Thyroid gland (tissue), 4 donors: ENCODE measurements at regions of chr11 and their contacts with region 1.

Region 1: GRCh38 chr11:8964324-8965320 is at the start of gene TMEM9B:
- DNase-seq: peak; percentile 95 to 98
- H3K4me3 ChIP-seq: peak within 1 kb of the TSS; percentile 24 to 78 (median 63)
- H3K27ac ChIP-seq: peak within 1 kb of the TSS; percentile 88 to 92 (median 90)
- H3K4me1 ChIP-seq: peaks cover 23 to 29% of the 10 kb centered on the region in 2 donors
- H3K27me3 ChIP-seq: no peaks in the 10 kb centered on the region
- CTCF ChIP-seq: peak in 1 of 6 experiments; percentile 11
- POLR2A ChIP-seq: peak; percentile 47 to 89
- total RNA-seq, gene TMEM9B: 73.3 to 158 (median 114) TPM

Region 2: DNA sequence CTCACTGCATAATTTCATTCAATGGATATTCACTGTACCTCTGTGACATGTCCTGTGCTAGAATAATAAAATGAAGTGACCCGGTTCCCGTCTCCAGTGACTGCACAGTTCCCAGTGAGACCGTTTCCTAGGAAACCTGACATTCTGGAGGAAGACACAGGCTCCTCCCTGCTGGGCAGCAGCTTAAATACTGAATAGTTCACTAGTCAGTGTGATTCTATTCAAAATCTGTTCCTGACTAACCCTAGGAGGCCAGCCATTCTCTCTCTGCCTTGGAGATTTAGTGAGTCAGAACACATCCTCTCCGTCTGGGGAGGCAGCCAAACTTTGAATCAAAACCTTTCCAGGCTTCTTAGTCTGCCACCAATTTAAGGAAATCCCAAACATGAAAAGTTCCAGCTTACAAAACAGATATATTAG is 293.4 kb before region 1 on chr11:
- intact Hi-C with region 1: loop called (anchors 10 kb)
- DNase-seq: peak; percentile 82 to 83
- H3K4me3 ChIP-seq: no peak overlapping the region
- H3K27ac ChIP-seq: peak overlapping the region; percentile 81 to 90 (median 85)
- H3K4me1 ChIP-seq: peaks cover 16 to 17% of the 10 kb centered on the region in 2 donors
- H3K27me3 ChIP-seq: no peaks in the 10 kb centered on the region
- CTCF ChIP-seq: no peak
- POLR2A ChIP-seq: peak in 1 of 2 donors; percentile 64

Region 3: GRCh38 chr11:9137293-9138132 is 172.9 kb after region 1 on chr11:
- intact Hi-C with region 1: no loop called
- DNase-seq: peak; percentile 80 to 82
- H3K4me3 ChIP-seq: no peak overlapping the region
- H3K27ac ChIP-seq: peak overlapping the region; percentile 14 to 88 (median 78)
- H3K4me1 ChIP-seq: peaks cover 17 to 30% of the 10 kb centered on the region in 2 donors
- H3K27me3 ChIP-seq: no peaks in the 10 kb centered on the region
- CTCF ChIP-seq: peak; percentile 86 to 97 (median 94)
- POLR2A ChIP-seq: no peak

Region 4: DNA sequence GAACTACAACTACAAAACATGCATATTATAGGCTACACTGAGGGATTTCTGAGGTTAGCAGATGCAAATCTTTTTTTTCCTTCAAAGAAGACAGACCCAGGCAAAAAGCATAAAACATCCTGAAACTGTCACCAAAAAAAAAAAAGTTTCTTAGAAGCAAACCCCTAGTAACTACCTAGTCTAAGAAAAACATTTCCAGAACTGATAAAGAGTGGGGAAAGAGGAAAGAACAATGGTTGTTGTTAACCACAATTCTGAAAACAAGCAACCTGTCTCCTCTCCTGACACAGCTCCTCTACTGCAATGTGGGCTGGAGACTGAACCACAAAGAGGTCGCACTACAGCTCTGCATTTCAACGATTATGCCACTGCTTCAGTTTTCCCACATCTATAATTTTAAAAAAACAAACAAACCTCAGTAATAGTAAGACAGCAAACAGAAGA is 285.5 kb after region 1 on chr11:
- intact Hi-C with region 1: no loop called
- DNase-seq: no peak
- H3K4me3 ChIP-seq: no peak overlapping the region
- H3K27ac ChIP-seq: no peak overlapping the region
- H3K4me1 ChIP-seq: peaks cover 0 to 16% of the 10 kb centered on the region in 2 donors
- H3K27me3 ChIP-seq: no peaks in the 10 kb centered on the region
- CTCF ChIP-seq: no peak
- POLR2A ChIP-seq: no peak